ENCODE measurements at regions of chr19 and their contacts with region 1.

Region 1: GRCh38 chr19:52853880-52854279 is 3.5 kb downstream of the ZNF468 start:
- DNase-seq: no peak
- ATAC-seq: no peak
- H3K4me3 ChIP-seq: no peak overlapping the region
- H3K4me3 Mint-ChIP-seq: peak overlapping the region in 1 of 10 donors; percentile 53
- H3K27ac ChIP-seq: no peak overlapping the region
- H3K27ac Mint-ChIP-seq: no peak overlapping the region
- H3K4me1 ChIP-seq: no peaks in the 10 kb centered on the region
- H3K4me1 Mint-ChIP-seq: peaks cover 15 to 39% (median 32%) of the 10 kb centered on the region in 7 donors
- H3K27me3 ChIP-seq: no peaks in the 10 kb centered on the region
- H3K27me3 Mint-ChIP-seq: no peaks in the 10 kb centered on the region

Region 2: GRCh38 chr19:52516191-52516590 is 337.7 kb before region 1 on chr19:
- CTCF ChIA-PET with region 1: no interaction called
- POLR2A ChIA-PET with region 1: no interaction called
- intact Hi-C with region 1: loop called in 1 of 2 experiments (anchors 5 kb)
- DNase-seq: no peak
- ATAC-seq: no peak
- H3K4me3 ChIP-seq: no peak overlapping the region
- H3K4me3 Mint-ChIP-seq: no peak overlapping the region
- H3K27ac ChIP-seq: no peak overlapping the region
- H3K27ac Mint-ChIP-seq: no peak overlapping the region
- H3K4me1 ChIP-seq: no peaks in the 10 kb centered on the region
- H3K4me1 Mint-ChIP-seq: peaks cover 0 to 2% (median 0%) of the 10 kb centered on the region in 7 donors
- H3K27me3 ChIP-seq: no peaks in the 10 kb centered on the region
- H3K27me3 Mint-ChIP-seq: peaks cover 0 to 20% (median 7%) of the 10 kb centered on the region in 5 donors

Region 3: GRCh38 chr19:52823676-52824075 is 30.2 kb before region 1 on chr19:
- CTCF ChIA-PET with region 1: no interaction called
- POLR2A ChIA-PET with region 1: no interaction called
- intact Hi-C with region 1: loop called in 1 of 2 experiments (anchors 1 kb)
- DNase-seq: no peak
- ATAC-seq: no peak
- H3K4me3 ChIP-seq: no peak overlapping the region
- H3K4me3 Mint-ChIP-seq: no peak overlapping the region
- H3K27ac ChIP-seq: no peak overlapping the region
- H3K27ac Mint-ChIP-seq: no peak overlapping the region
- H3K4me1 ChIP-seq: no peaks in the 10 kb centered on the region
- H3K4me1 Mint-ChIP-seq: peaks cover 11 to 23% (median 15%) of the 10 kb centered on the region in 7 donors
- H3K27me3 ChIP-seq: no peaks in the 10 kb centered on the region
- H3K27me3 Mint-ChIP-seq: peaks cover 0 to 5% (median 0%) of the 10 kb centered on the region in 5 donors

Region 4: GRCh38 chr19:52871446-52872120 is 17.7 kb after region 1 on chr19:
- CTCF ChIA-PET with region 1: no interaction called
- POLR2A ChIA-PET with region 1: no interaction called
- intact Hi-C with region 1: no loop called
- DNase-seq: no peak
- ATAC-seq: no peak
- H3K4me3 ChIP-seq: no peak overlapping the region
- H3K4me3 Mint-ChIP-seq: no peak overlapping the region
- H3K27ac ChIP-seq: no peak overlapping the region
- H3K27ac Mint-ChIP-seq: peak overlapping the region in 1 of 9 donors; percentile 68
- H3K4me1 ChIP-seq: no peaks in the 10 kb centered on the region
- H3K4me1 Mint-ChIP-seq: peaks cover 0 to 3% (median 0%) of the 10 kb centered on the region in 7 donors
- H3K27me3 ChIP-seq: no peaks in the 10 kb centered on the region
- H3K27me3 Mint-ChIP-seq: no peaks in the 10 kb centered on the region

Region 5: DNA sequence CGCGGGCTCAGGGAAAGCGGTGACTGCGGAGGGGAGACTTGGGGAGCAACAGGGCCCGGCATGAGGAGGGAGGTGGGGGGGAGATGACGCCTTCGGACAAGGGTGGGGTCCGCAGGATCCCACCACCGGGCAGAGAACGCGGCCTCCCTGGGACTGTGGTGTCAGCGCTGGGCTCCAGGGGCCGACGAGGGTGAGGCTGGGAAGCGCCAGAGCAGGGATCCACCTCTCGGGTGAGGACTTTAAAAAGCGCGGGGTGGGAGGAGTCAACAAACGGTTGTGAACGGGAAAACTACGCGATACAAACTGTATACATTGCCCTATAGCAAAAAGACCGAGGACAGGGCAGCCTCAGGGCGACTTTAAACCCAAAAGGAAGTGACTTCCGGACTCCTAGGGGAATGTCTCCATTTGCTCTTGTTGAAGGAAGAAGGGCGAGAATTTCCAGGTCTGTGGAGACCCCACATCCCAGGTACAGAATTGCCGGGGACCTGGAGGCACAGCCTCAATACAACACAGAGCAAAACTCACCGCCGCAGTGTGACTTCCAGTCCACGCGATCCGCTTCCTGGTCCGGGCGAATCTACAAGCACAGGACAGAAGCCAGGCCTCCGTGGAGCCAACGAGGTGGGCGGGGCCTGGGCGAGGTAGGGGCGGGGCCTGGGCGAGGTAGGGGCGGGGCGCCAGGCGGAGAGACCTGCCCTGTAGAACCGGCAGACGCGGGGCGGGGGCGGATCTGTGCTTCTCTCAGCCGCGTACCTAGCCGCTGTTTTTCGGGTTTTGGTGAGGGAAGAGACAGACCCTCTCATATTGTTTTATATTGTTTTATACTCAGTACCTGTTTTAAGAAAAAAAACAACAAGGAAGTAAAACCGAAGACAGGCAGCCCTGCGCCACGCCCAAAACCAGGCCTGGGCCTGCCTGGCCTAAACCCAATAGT is 69.2 kb after region 1 on chr19 and contains the start of gene ZNF888:
- CTCF ChIA-PET with region 1: no interaction called
- POLR2A ChIA-PET with region 1: interaction called, 4 read pairs
- intact Hi-C with region 1: loop called in 1 of 2 experiments (anchors 5 kb)
- DNase-seq: peak; percentile 52 to 89 (median 78)
- ATAC-seq: peak; percentile 100
- H3K4me3 ChIP-seq: peak within 1 kb of the TSS; percentile 87
- H3K4me3 Mint-ChIP-seq: peak within 1 kb of the TSS; percentile 80 to 94 (median 92)
- H3K27ac ChIP-seq: peak within 1 kb of the TSS; percentile 77
- H3K27ac Mint-ChIP-seq: peak within 1 kb of the TSS; percentile 23 to 93 (median 91)
- H3K4me1 ChIP-seq: no peaks in the 10 kb centered on the region
- H3K4me1 Mint-ChIP-seq: peaks cover 11 to 37% (median 24%) of the 10 kb centered on the region in 7 donors
- H3K27me3 ChIP-seq: no peaks in the 10 kb centered on the region
- H3K27me3 Mint-ChIP-seq: peaks cover 0 to 11% (median 6%) of the 10 kb centered on the region in 5 donors
- total RNA-seq, gene ZNF888: 2.1 to 7.2 (median 6.0) TPM

Region 6: GRCh38 chr19:52942386-52943133 is 88.7 kb after region 1 on chr19:
- CTCF ChIA-PET with region 1: no interaction called
- POLR2A ChIA-PET with region 1: no interaction called
- intact Hi-C with region 1: loop called (anchors 1 kb)
- DNase-seq: peak; percentile 88 to 99 (median 95)
- ATAC-seq: peak; percentile 100
- H3K4me3 ChIP-seq: peak overlapping the region; percentile 98
- H3K4me3 Mint-ChIP-seq: peak overlapping the region; percentile 87 to 95 (median 92)
- H3K27ac ChIP-seq: peak overlapping the region; percentile 85
- H3K27ac Mint-ChIP-seq: peak overlapping the region; percentile 33 to 94 (median 89)
- H3K4me1 ChIP-seq: peaks cover 0 to 4% of the 10 kb centered on the region in 2 donors
- H3K4me1 Mint-ChIP-seq: peaks cover 12 to 27% (median 16%) of the 10 kb centered on the region in 7 donors
- H3K27me3 ChIP-seq: no peaks in the 10 kb centered on the region
- H3K27me3 Mint-ChIP-seq: no peaks in the 10 kb centered on the region

Region 7: DNA sequence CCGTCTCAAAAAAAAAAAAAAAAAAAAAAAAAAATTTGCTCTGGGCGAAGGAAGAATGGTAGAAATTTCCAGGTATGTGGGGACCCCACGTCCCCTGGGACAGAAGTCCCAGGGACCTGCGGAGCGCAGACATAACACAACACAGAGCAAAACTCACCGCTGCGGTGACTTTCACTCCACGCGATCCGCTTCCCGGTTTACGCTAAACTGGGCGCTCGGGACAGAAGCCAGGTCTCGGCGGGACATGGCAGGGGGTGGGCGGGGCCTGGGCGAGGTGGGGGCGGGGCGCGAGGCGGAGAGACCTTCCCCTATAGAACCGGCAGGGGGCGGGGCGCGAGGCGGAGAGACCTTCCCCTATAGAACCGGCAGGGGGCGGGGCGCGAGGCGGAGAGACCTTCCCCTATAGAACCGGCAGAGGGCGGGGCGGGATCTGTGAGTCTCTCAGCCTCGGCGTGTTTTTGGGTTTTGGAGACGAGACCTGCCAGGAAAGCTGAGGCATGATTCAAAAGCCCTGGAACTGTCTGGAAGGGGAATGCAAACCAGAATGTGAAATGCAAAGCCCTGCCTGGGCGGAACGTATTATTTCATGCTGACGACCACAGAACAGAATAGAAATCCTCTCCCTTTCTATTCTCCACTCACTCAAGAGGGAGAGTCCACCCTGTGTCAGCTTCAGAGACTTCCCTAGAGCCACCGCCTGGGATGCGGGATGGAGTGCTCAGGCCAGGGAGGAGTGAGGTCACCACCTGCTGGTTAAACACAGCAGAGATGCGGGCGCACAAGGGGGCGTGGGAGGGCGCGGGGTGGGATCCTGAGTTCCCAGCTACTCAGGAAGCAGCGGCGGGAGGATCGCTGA is 139.7 kb after region 1 on chr19:
- CTCF ChIA-PET with region 1: no interaction called
- POLR2A ChIA-PET with region 1: no interaction called
- intact Hi-C with region 1: loop called in 1 of 2 experiments (anchors 1 kb)
- DNase-seq: peak; percentile 49 to 85 (median 81)
- ATAC-seq: peak; percentile 100
- H3K4me3 ChIP-seq: peak overlapping the region; percentile 60
- H3K4me3 Mint-ChIP-seq: peak overlapping the region; percentile 56 to 92 (median 86)
- H3K27ac ChIP-seq: no peak overlapping the region
- H3K27ac Mint-ChIP-seq: peak overlapping the region in 5 of 9 donors; percentile 25 to 83 (median 54)
- H3K4me1 ChIP-seq: peaks cover 0 to 6% of the 10 kb centered on the region in 2 donors
- H3K4me1 Mint-ChIP-seq: peaks cover 8 to 26% (median 14%) of the 10 kb centered on the region in 7 donors
- H3K27me3 ChIP-seq: no peaks in the 10 kb centered on the region
- H3K27me3 Mint-ChIP-seq: peaks cover 0 to 23% (median 14%) of the 10 kb centered on the region in 5 donors

Measured in naive thymus-derived CD4-positive, alpha-beta T cell (primary cell).